HEK293T (cell line): ENCODE measurements at regions of chr17 and their contacts with region 1.

Region 1: GRCh38 chr17:42832974-42833766 is at the start of gene PSME3:
- DNase-seq: peak; percentile 93

Region 2: GRCh38 chr17:42750739-42751344 is 82.3 kb before region 1 on chr17:
- CTCF ChIA-PET with region 1: no interaction called
- POLR2A ChIA-PET with region 1: no interaction called
- DNase-seq: no peak

Region 3: GRCh38 chr17:42819944-42820535 is 13.1 kb before region 1 on chr17:
- CTCF ChIA-PET with region 1: interaction called, 12 read pairs
- POLR2A ChIA-PET with region 1: interaction called, 45 read pairs
- DNase-seq: peak; percentile 74

Region 4: DNA sequence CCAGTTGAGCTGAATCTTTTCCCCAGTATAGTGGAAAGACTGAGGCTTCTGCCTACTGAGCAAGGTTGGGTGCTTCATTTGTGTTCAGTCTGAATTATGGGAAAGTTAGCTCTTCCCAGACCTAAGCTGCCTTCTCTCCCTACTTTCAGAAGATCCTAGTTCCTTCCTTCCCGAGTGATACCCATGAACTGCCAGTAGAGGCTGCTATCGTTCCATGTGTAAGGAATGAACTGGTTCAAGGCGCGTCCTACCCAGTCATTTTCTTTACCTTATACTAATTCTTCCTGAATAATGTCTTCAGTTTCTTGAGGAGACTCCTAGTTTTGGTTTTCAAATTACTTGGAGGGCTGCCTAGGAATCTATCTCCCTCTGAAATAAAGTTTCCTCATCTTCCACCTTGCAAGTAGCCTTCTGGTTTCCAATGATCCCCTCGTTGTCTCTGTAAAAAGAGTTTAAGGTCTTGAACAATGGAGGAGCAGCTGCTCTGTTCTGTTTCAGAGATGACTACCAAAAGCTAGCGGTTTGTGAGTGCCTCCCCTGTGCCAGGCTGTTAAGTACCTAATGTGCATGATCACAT is 10.3 kb after region 1 on chr17:
- CTCF ChIA-PET with region 1: interaction called, 5 read pairs
- POLR2A ChIA-PET with region 1: interaction called, 18 read pairs
- DNase-seq: peak; percentile 71

Region 5: DNA sequence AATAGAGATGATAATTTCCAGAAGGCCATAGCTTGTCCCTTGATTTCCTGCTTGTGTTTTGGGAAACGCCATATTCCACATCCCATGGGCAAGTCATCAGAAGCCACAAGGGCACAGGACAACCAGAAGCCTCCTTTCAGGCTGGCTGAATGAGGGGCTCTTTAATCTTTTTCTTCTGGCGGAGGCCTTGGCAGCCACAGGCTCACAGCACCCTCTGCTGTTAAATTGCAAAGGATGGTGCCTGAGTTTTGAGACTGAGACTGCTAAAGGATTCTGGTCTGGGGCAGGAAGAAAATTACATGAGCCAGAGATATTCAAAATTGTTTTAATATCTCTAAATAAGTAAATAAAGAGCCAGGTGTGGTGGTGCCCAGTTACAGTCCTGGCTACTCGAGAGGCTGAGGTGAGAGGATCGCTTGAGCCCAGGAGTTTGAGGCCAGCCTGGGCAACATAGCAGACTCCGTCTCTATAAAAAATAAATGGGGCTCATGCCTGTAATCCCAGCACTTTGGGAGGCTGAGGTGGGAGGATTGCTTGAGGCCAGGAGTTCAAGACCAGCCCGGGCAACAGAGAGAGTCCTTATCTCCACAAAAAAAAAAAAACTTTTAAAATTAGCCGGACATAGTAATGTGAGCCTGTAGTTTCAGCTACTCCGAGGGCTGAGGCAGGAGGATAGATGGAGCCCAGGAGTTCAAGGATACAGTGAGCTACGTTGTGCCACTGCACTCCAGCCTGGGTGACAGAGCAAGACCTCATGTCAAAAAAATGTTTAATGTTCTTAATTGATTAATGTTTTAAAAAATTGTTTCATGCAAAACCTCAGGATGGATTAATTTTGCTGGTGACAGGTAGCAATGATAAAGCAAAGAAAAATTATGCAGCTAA is 104.8 kb after region 1 on chr17:
- CTCF ChIA-PET with region 1: interaction called, 11 read pairs
- POLR2A ChIA-PET with region 1: no interaction called
- DNase-seq: peak; percentile 73